Activated T-helper 1 cell treated with anti-CD3 and anti-CD28 coated beads, Interleukin-12 subunit alpha, Interleukin-12 subunit beta, Interleukin-2, Interleukin-4 antibody, amounts not matched to agents 30 ng/mL and 10 ng/mL and 1 ng/mL, durations not matched to agents 14 hours and 24 hours and 36 hours (primary cell): ENCODE measurements at regions of chr3 and their contacts with region 1.

Region 1: DNA sequence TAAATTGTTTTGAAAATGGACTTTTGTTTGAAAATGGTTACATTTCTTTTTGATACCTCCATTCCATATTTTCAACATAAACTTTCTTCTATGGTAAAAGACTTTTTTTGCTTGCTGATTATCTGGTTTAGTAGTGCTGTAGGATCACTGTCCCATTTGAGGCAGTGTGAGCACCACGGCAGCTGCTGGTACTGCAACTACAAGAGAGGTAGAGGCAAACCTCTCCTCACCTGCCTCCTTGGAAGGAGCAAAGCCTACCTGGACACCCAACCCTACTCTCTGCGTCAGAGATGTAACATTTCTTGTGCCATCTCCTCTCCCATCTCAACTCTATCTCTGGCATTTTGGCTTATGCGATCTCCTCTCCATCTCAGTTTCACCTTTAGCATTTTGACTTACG is 460.1 kb downstream of the SHQ1 start:
- DNase-seq: no peak
- H3K4me3 Mint-ChIP-seq: no peak overlapping the region
- H3K27ac Mint-ChIP-seq: no peak overlapping the region
- H3K4me1 Mint-ChIP-seq: peaks cover 33% of the 10 kb centered on the region
- H3K27me3 Mint-ChIP-seq: no peaks in the 10 kb centered on the region

Region 2: DNA sequence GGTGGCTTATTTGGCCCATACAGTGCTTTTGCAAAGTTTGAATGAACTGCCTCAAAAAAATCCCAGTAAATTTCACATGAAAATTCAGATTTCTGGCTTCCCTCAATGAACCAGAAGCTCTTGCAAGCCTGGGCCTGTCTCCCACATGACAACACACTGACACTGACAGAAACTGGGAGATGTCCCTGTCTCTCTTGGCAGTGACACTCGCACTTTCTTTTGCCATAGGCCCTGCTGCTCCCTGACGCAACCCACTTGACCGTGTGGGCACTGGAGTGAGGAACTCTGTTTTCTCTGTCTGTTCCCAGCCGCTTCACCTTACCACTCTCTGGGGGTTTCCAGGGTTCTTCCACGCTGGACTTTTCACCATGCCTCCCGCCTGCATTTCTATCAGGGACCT is 64.3 kb before region 1 on chr3:
- intact Hi-C with region 1: loop called (anchors 2 kb)
- DNase-seq: no peak
- H3K4me3 Mint-ChIP-seq: no peak overlapping the region
- H3K27ac Mint-ChIP-seq: peak overlapping the region; percentile 69
- H3K4me1 Mint-ChIP-seq: peaks cover 6% of the 10 kb centered on the region
- H3K27me3 Mint-ChIP-seq: peaks cover 2% of the 10 kb centered on the region

Region 3: GRCh38 chr3:72538070-72538745 is 150.1 kb after region 1 on chr3:
- intact Hi-C with region 1: no loop called
- DNase-seq: no peak
- H3K4me3 Mint-ChIP-seq: no peak overlapping the region
- H3K27ac Mint-ChIP-seq: peak overlapping the region; percentile 36
- H3K4me1 Mint-ChIP-seq: peaks cover 45% of the 10 kb centered on the region
- H3K27me3 Mint-ChIP-seq: peaks cover 3% of the 10 kb centered on the region